Activated CD4-positive, alpha-beta memory T cell treated with anti-CD3 and anti-CD28 coated beads for 36 hours (primary cell): ENCODE measurements at regions of chr7 and their contacts with region 1.

Region 1: DNA sequence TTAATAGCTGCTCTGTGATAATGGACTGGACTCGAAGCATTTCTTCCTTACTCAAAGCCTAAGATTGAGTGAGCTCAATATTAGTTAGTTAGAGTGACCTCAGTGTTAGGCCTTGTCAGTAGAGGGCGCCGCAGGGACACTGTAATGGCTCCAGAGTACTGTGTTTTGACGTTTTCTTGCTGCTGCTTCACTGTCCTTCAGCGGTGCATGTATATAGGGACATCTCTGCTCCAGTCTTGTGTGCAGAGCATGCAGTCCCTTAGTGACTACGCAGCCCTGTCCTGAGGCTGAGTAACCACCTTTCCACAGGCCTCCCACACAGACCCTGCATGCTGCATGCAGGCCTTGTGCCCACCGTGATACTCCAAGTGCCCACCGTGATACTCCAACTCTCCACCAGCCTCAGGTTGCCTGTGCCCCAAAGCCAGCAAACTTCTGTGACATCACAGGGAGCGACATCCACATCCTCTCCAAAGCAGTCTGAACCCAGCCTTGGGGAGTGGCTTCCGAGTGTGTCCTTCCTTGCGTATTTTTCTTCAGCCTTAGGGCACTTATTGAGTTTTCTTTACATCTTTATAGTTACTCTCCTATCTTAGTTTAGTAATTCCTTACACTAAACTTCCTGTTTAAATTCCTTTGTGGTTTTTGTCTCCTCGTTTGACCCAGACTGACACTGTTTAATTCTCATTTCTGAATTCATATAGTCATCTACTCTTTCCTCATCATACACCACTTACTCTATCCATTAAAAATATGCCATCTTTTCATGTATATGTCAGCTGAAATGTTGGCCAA is 118.2 kb downstream of the JAZF1 start:
- DNase-seq: peak; percentile 74
- H3K4me3 Mint-ChIP-seq: no peak overlapping the region
- H3K27ac Mint-ChIP-seq: no peak overlapping the region
- H3K4me1 Mint-ChIP-seq: peaks cover 3% of the 10 kb centered on the region
- H3K27me3 Mint-ChIP-seq: no peaks in the 10 kb centered on the region

Region 2: DNA sequence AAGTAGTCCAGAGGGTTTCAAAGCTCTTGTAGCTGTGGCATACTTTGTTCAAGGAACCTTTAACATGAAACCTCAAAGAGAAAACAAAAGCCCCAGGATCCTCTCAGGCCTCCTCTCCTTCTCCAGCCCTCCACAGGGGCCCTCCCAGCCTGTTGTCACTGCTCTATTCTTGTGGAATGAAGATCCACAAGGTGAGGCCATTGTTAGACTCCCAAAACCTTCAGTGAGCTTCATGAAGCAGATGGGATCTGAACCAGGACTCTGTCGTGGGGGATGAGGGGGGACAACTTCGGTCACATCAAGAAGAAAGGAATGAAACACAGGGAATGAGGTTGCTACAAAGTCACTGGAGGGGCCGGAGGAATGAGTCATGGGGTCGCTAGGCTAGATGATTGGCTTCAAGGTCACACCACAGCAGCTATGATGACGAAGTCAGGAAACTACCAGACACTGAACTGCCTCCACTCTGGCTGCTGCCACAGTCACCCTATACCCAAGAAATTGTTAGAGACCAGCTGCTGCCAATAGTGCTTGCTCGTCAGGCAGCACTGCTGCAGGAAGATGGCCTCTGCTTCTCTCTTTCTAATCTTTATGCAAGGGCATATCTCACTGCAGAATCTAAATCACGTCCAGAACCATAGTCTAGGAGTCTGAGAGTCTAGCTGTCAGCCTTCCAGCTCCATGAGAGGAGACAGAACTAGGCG is 608.5 kb before region 1 on chr7:
- CTCF ChIA-PET with region 1: no interaction called
- POLR2A ChIA-PET with region 1: no interaction called
- intact Hi-C with region 1: no loop called
- DNase-seq: no peak
- H3K4me3 Mint-ChIP-seq: no peak overlapping the region
- H3K27ac Mint-ChIP-seq: no peak overlapping the region
- H3K4me1 Mint-ChIP-seq: no peaks in the 10 kb centered on the region
- H3K27me3 Mint-ChIP-seq: peaks cover 9% of the 10 kb centered on the region

Region 3: DNA sequence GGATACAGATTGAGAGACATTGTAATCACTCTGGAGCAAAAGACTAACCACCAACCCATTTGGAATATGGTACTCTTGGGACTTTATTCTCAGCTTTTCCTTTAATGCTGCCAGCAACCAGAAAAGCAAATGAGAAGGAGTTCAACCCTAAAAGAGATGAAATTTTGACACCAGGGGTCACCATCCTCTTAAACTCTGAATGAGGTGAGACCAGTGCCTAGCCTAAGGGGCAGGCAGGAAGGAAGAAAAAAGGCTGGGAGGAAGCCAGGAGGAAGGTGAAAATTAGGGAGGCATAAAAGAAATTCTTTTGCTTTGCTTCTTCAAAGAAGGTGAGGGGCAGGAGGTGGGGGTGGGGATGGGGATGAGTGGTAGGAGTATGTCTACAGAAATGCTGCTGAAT is 17.6 kb before region 1 on chr7:
- CTCF ChIA-PET with region 1: interaction called, 11 read pairs
- POLR2A ChIA-PET with region 1: no interaction called
- intact Hi-C with region 1: loop called (anchors 2 kb)
- DNase-seq: no peak
- H3K4me3 Mint-ChIP-seq: no peak overlapping the region
- H3K27ac Mint-ChIP-seq: no peak overlapping the region
- H3K4me1 Mint-ChIP-seq: peaks cover 21% of the 10 kb centered on the region
- H3K27me3 Mint-ChIP-seq: peaks cover 16% of the 10 kb centered on the region

Region 4: GRCh38 chr7:28078036-28078901 is 15.9 kb after region 1 on chr7:
- CTCF ChIA-PET with region 1: interaction called, 63 read pairs
- POLR2A ChIA-PET with region 1: no interaction called
- intact Hi-C with region 1: no loop called
- DNase-seq: peak; percentile 60
- H3K4me3 Mint-ChIP-seq: no peak overlapping the region
- H3K27ac Mint-ChIP-seq: no peak overlapping the region
- H3K4me1 Mint-ChIP-seq: peaks cover 5% of the 10 kb centered on the region
- H3K27me3 Mint-ChIP-seq: no peaks in the 10 kb centered on the region

Region 5: GRCh38 chr7:28088032-28088431 is 25.6 kb after region 1 on chr7:
- CTCF ChIA-PET with region 1: interaction called, 76 read pairs
- POLR2A ChIA-PET with region 1: no interaction called
- intact Hi-C with region 1: no loop called
- DNase-seq: no peak
- H3K4me3 Mint-ChIP-seq: no peak overlapping the region
- H3K27ac Mint-ChIP-seq: no peak overlapping the region
- H3K4me1 Mint-ChIP-seq: peaks cover 9% of the 10 kb centered on the region
- H3K27me3 Mint-ChIP-seq: no peaks in the 10 kb centered on the region

Region 6: GRCh38 chr7:28132959-28133870 is 70.8 kb after region 1 on chr7:
- CTCF ChIA-PET with region 1: no interaction called
- POLR2A ChIA-PET with region 1: no interaction called
- intact Hi-C with region 1: no loop called
- DNase-seq: no peak
- H3K4me3 Mint-ChIP-seq: no peak overlapping the region
- H3K27ac Mint-ChIP-seq: no peak overlapping the region
- H3K4me1 Mint-ChIP-seq: peaks cover 31% of the 10 kb centered on the region
- H3K27me3 Mint-ChIP-seq: no peaks in the 10 kb centered on the region